ENCODE measurements at regions of chr6 and their contacts with region 1.

Region 1: DNA sequence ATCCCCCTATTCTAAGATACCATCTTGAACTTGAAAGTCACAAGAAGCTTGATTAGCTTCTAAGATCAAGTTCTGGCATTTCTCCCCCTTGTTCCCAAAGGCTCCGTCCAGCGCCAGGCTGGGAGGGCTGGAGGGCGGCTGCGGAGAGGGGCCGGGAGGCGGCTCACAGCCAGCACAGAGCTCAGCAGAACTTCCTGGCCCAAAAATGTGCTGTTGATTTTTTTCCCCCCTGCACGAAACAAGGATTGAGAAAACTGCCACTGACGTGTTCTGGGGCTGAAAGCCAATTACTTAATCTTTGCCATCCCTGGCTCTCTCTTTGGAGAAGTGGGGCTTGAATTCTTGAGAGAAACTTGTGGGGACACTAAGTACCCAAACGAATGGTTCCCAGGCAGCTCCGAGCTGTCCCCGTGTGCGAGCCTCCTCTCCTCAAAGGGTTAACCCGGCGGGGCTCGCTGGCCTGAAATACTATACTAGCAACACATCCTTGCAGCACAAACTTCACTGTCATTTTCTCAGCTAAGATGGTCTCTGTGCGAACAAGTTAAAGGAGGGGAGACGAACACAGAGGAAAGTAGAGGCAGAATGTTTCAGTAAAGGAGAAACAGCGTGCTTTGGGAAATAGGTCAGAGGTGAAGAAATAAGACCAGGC is 452 bp downstream of the TRAF3IP2 start:
- DNase-seq: peak in 3 of 5 donors; percentile 2 to 51 (median 42)
- H3K4me3 ChIP-seq: peak overlapping the region; percentile 77
- H3K4me3 Mint-ChIP-seq: peak overlapping the region; percentile 86 to 98 (median 93)
- H3K27ac ChIP-seq: peak overlapping the region; percentile 70
- H3K27ac Mint-ChIP-seq: peak overlapping the region; percentile 81 to 96 (median 92)
- H3K4me1 ChIP-seq: peaks cover 14% of the 10 kb centered on the region
- H3K4me1 Mint-ChIP-seq: peaks cover 46 to 60% (median 60%) of the 10 kb centered on the region in 3 donors
- H3K27me3 ChIP-seq: no peaks in the 10 kb centered on the region
- H3K27me3 Mint-ChIP-seq: peaks cover 0 to 1% of the 10 kb centered on the region in 2 donors

Region 2: GRCh38 chr6:111154981-111155380 is 450.2 kb before region 1 on chr6:
- CTCF ChIA-PET with region 1: no interaction called
- POLR2A ChIA-PET with region 1: no interaction called
- DNase-seq: no peak
- H3K4me3 ChIP-seq: no peak overlapping the region
- H3K4me3 Mint-ChIP-seq: no peak overlapping the region
- H3K27ac ChIP-seq: no peak overlapping the region
- H3K27ac Mint-ChIP-seq: no peak overlapping the region
- H3K4me1 ChIP-seq: peaks cover 4% of the 10 kb centered on the region
- H3K4me1 Mint-ChIP-seq: peaks cover 6 to 16% (median 15%) of the 10 kb centered on the region in 3 donors
- H3K27me3 ChIP-seq: peaks cover 4% of the 10 kb centered on the region
- H3K27me3 Mint-ChIP-seq: peaks cover 1 to 40% of the 10 kb centered on the region in 2 donors

Region 3: DNA sequence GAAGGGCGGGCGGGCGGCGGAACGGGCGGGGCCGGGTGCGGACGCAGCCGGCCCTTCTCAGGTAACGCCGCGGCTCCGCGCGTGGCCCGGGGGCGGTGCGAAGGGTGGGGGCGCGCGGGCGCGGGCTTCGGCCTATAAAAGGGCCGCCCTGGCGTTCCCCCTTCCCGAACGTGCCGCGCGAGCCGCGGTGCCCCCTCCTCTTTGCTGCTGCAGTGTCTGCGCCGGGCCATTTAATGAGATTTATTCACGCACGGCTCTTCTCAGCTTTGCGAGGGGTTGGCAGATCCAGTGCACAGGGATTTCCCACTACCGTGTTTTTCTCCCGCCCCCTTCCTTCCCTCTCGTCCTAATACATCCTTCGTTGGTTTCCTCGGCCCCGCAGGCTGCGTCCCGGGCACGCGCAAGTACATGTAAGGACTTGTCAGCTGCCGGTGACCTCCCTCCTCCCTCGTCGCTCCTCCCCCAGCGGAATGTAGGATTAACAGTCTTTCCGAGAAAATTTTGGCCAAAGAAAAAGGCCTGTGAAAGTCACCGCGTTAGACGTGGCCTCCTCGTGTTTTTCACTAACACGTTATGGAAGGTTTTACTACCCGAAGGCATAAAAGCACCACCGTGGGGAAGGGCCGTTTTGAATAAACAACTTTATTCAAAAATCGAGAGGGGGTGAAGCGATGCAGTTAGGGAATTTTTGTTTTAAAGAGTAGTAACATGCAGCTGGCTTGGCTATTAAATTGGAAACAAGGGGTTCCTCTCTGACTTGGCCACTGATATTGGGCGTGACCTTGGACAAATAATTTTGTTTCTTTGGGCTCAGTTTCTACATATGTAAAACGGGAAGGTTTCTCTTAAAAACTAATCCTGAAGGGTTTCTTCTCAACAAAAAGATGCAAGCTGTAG is 121.2 kb before region 1 on chr6:
- CTCF ChIA-PET with region 1: interaction called, 7 read pairs
- POLR2A ChIA-PET with region 1: interaction called, 18 read pairs
- DNase-seq: peak in 3 of 5 donors; percentile 76 to 87 (median 79)
- H3K4me3 ChIP-seq: peak overlapping the region; percentile 91
- H3K4me3 Mint-ChIP-seq: peak overlapping the region; percentile 89 to 99 (median 97)
- H3K27ac ChIP-seq: peak overlapping the region; percentile 95
- H3K27ac Mint-ChIP-seq: peak overlapping the region; percentile 95 to 99 (median 98)
- H3K4me1 ChIP-seq: peaks cover 32% of the 10 kb centered on the region
- H3K4me1 Mint-ChIP-seq: peaks cover 41 to 68% (median 58%) of the 10 kb centered on the region in 3 donors
- H3K27me3 ChIP-seq: no peaks in the 10 kb centered on the region
- H3K27me3 Mint-ChIP-seq: no peaks in the 10 kb centered on the region

Region 4: DNA sequence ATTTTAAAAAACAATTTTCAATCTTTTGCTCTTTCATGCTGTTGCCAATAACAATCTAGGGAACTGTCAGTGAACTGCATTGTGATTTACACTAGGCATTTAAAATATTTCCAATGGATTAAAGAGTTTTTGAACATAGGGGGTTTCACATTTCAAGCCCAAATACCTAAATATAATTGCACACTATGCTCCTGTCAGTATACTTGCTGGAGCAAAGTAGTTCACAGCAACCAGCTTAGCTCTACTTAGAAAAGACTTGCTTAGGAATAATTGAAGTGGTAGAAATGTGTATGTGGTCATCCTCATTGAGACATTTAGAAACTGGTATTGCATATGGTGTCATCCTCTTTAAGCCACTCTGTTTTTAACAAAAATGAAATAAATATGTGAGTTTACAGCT is 80.5 kb before region 1 on chr6:
- CTCF ChIA-PET with region 1: no interaction called
- POLR2A ChIA-PET with region 1: interaction called, 11 read pairs
- DNase-seq: no peak
- H3K4me3 ChIP-seq: no peak overlapping the region
- H3K4me3 Mint-ChIP-seq: no peak overlapping the region
- H3K27ac ChIP-seq: no peak overlapping the region
- H3K27ac Mint-ChIP-seq: no peak overlapping the region
- H3K4me1 ChIP-seq: peaks cover 10% of the 10 kb centered on the region
- H3K4me1 Mint-ChIP-seq: peaks cover 16 to 26% (median 22%) of the 10 kb centered on the region in 3 donors
- H3K27me3 ChIP-seq: no peaks in the 10 kb centered on the region
- H3K27me3 Mint-ChIP-seq: no peaks in the 10 kb centered on the region